ENCODE measurements at regions of chr17 and their contacts with region 1.

Region 1: GRCh38 chr17:4709794-4710692 is at the start of gene ARRB2:
- DNase-seq: peak; percentile 98
- H3K4me3 ChIP-seq: peak within 1 kb of the TSS; percentile 50 to 63 (median 63)
- H3K27ac ChIP-seq: peak within 1 kb of the TSS; percentile 14
- H3K4me1 ChIP-seq: peaks cover 14% of the 10 kb centered on the region
- H3K27me3 ChIP-seq: no peaks in the 10 kb centered on the region
- CTCF ChIP-seq: peak; percentile 35 to 72
- total RNA-seq, gene ARRB2: 3.5 to 14.4 TPM

Region 2: GRCh38 chr17:4751932-4752331 is 41.9 kb after region 1 on chr17:
- CTCF ChIA-PET with region 1: no interaction called
- dilution Hi-C with region 1: no loop called
- in situ Hi-C with region 1: no loop called
- intact Hi-C with region 1: loop called (anchors 1 kb)
- DNase-seq: no peak
- H3K4me3 ChIP-seq: no peak overlapping the region
- H3K27ac ChIP-seq: no peak overlapping the region
- H3K4me1 ChIP-seq: no peaks in the 10 kb centered on the region
- H3K27me3 ChIP-seq: no peaks in the 10 kb centered on the region
- CTCF ChIP-seq: no peak

Region 3: DNA sequence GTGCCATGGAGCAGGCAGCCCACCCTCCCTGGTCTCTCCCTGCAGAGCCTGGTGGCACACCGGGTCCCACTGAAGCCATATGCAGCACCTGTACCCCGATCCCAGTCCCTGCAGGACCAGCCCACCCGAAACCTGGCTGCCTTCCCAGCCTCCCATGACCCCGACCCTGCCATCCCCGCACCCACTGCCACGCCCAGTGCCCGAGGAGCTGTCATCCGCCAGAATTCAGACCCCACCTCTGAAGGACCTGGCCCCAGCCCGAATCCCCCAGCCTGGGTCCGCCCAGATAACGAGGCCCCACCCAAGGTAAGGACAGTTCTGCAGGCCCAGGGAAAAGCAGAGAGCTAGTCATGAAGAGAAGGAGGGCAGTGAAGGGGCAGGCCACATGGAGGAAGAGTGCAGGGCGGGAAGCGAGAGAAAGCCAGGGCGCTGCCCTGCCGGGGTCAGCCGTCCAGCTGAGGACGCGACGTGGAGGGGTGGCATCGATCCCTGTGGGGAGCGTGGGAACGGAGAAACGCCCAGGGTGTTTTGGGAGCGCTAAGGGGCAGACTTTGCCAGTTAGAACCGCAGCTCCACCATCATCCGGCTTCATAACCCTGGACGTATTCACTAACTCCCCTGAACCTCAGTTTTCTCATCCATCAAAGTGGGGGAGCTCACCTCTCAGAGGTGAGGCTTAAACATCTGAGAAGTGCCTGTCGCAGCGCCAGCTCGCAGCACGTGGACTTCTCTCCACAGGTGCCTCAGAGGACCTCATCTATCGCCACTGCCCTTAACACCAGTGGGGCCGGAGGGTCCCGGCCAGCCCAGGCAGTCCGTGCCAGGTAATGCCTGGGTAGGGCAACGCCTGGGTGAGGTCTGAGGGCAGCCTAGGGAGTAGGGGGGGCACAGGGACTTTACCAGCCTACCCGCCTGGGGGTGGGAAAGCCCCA is 181.6 kb after region 1 on chr17:
- CTCF ChIA-PET with region 1: no interaction called
- dilution Hi-C with region 1: no loop called
- in situ Hi-C with region 1: no loop called
- intact Hi-C with region 1: loop called (anchors 2 kb)
- DNase-seq: no peak
- H3K4me3 ChIP-seq: no peak overlapping the region
- H3K27ac ChIP-seq: no peak overlapping the region
- H3K4me1 ChIP-seq: no peaks in the 10 kb centered on the region
- H3K27me3 ChIP-seq: no peaks in the 10 kb centered on the region
- CTCF ChIP-seq: no peak

Region 4: GRCh38 chr17:4903051-4903818 is 193.2 kb after region 1 on chr17 and contains the start of gene CHRNE:
- CTCF ChIA-PET with region 1: no interaction called
- dilution Hi-C with region 1: no loop called
- in situ Hi-C with region 1: no loop called
- intact Hi-C with region 1: loop called (anchors 1 kb)
- DNase-seq: peak; percentile 73
- H3K4me3 ChIP-seq: no peak within 1 kb of the TSS
- H3K27ac ChIP-seq: no peak within 1 kb of the TSS
- H3K4me1 ChIP-seq: peaks cover 15% of the 10 kb centered on the region
- H3K27me3 ChIP-seq: no peaks in the 10 kb centered on the region
- CTCF ChIP-seq: peak; percentile 80 to 81
- total RNA-seq, gene CHRNE: under 0.01 TPM in 1 of 2 donors, not detected in the other

Region 5: GRCh38 chr17:5249615-5250014 is 539.6 kb after region 1 on chr17:
- CTCF ChIA-PET with region 1: no interaction called
- dilution Hi-C with region 1: no loop called
- in situ Hi-C with region 1: no loop called
- intact Hi-C with region 1: no loop called
- DNase-seq: peak; percentile 70
- H3K4me3 ChIP-seq: no peak overlapping the region
- H3K27ac ChIP-seq: no peak overlapping the region
- H3K4me1 ChIP-seq: no peaks in the 10 kb centered on the region
- H3K27me3 ChIP-seq: no peaks in the 10 kb centered on the region
- CTCF ChIP-seq: peak; percentile 64 to 69

Region 6: GRCh38 chr17:5309851-5310250 is 599.8 kb after region 1 on chr17:
- CTCF ChIA-PET with region 1: no interaction called
- dilution Hi-C with region 1: no loop called
- in situ Hi-C with region 1: no loop called
- intact Hi-C with region 1: no loop called
- DNase-seq: no peak
- H3K4me3 ChIP-seq: no peak overlapping the region
- H3K27ac ChIP-seq: no peak overlapping the region
- H3K4me1 ChIP-seq: no peaks in the 10 kb centered on the region
- H3K27me3 ChIP-seq: no peaks in the 10 kb centered on the region
- CTCF ChIP-seq: no peak